ENCODE measurements at regions of chr16 and their contacts with region 1.

Region 1: DNA sequence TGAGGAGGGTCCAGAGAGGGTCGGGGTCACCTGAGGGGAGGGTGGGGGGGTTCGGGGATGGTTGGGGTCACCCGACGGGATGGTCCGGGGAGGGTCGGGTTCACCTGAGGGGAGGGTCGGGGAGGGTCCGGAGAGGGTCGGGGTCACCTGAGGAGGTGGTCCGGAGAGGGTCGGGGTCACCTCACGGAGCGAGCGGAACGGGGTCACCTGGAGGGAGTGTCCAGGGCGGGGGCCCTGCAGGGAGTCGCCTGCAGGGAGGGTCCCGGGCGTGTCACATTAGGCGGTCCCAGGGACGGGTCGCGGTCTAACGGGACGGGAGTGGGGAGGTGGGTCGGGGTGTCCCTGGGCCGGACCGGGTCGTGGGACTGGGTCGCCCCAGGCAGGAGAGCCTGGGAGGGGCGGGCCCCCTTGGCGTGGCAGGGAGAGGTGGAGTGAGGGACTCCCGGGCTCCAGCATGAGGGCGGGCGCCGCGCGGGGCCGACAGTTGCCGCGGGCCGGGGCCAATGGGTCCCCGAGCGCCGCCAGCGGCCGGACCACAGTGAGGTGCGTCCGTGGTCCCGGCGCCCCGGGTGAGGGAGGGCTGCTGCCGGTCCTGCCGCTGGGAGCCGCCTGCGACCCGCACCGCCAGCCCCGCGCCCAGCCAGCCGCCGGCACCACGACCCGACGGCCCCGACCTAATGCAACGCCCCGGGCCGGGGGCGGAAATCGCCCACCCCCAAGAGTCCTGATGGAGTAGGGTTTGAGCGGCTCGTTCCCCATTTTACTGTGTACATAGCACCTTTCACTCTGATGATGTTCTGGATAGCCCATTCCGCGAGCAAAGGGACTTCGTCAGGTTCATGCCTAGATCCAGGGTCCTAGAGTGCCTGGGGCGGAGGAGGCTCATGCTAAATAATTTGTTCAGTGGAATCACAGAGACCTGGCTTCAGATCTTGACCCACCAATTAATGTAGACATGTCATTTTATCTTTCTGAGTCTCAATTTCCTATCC is 1.2 kb upstream of the ABCA3 start:
- DNase-seq: no peak
- H3K4me3 Mint-ChIP-seq: peak overlapping the region; percentile 80
- H3K27ac Mint-ChIP-seq: no peak overlapping the region
- H3K4me1 Mint-ChIP-seq: peaks cover 18% of the 10 kb centered on the region
- H3K27me3 Mint-ChIP-seq: peaks cover 18% of the 10 kb centered on the region
- CTCF ChIP-seq: no peak

Region 2: GRCh38 chr16:2520092-2520783 is 178.5 kb after region 1 on chr16 and contains the start of gene AMDHD2:
- CTCF ChIA-PET with region 1: interaction called, 11 read pairs
- intact Hi-C with region 1: no loop called
- DNase-seq: peak; percentile 93
- H3K4me3 Mint-ChIP-seq: peak within 1 kb of the TSS; percentile 83
- H3K27ac Mint-ChIP-seq: peak within 1 kb of the TSS; percentile 93
- H3K4me1 Mint-ChIP-seq: peaks cover 56% of the 10 kb centered on the region
- H3K27me3 Mint-ChIP-seq: no peaks in the 10 kb centered on the region
- CTCF ChIP-seq: no peak
- total RNA-seq, gene AMDHD2: 60.2 and 65.1 TPM in 2 replicates

Measured in Calu3 (cell line).